Activated CD4-positive, alpha-beta T cell treated with anti-CD3 and anti-CD28 coated beads for 36 hours (primary cell): ENCODE measurements at regions of chr5 and their contacts with region 1.

Region 1: DNA sequence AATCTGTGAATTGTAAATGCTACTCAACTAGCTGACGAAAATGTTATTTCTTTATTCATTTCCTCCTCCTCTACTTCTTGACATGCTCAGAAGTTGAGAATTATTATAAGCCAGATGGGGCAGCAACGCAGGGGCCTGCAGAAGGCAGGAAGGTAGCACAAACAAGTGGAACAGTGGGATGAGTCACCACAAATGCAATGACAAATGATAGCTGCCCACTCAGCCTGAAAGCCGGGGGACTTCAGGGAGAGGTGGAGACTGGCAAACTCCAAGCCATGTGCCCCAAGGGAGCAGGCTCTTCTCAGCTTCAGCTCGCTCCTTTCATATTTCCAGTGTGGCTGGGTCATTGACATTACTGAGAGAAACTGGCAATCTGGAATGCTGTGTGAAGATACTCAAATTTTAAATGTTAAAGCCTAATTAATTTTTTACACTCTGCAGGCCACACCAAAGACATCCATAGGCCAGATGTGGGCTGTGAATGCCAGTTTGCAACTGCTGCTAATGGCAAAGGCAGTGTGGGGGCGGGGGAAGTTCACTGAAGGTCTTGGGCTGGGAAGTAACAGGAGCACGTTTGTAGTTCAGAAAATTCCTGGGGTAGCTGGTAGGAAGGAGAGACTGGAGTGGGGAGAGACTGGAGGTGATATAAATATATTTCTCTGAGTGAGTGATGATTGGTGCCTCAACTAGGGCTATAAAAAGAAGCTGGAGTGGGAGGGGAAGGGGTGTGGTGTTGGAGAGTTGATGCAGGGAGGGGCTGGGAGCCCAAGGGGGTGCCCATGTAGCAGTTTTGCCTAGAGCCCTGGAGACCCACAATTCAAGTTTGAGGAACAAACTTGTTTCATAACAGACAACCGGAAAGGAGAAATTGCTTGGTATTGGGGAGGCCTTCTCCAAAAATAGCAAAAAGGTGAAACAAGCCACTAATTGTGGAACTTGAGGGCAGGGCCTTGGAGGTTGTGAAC is 20.8 kb upstream of the ADRB2 start:
- DNase-seq: peak; percentile 62
- ATAC-seq: peak; percentile 60
- H3K4me3 Mint-ChIP-seq: no peak overlapping the region
- H3K27ac Mint-ChIP-seq: peak overlapping the region; percentile 21
- H3K4me1 Mint-ChIP-seq: peaks cover 40% of the 10 kb centered on the region
- H3K27me3 Mint-ChIP-seq: peaks cover 17% of the 10 kb centered on the region

Region 2: DNA sequence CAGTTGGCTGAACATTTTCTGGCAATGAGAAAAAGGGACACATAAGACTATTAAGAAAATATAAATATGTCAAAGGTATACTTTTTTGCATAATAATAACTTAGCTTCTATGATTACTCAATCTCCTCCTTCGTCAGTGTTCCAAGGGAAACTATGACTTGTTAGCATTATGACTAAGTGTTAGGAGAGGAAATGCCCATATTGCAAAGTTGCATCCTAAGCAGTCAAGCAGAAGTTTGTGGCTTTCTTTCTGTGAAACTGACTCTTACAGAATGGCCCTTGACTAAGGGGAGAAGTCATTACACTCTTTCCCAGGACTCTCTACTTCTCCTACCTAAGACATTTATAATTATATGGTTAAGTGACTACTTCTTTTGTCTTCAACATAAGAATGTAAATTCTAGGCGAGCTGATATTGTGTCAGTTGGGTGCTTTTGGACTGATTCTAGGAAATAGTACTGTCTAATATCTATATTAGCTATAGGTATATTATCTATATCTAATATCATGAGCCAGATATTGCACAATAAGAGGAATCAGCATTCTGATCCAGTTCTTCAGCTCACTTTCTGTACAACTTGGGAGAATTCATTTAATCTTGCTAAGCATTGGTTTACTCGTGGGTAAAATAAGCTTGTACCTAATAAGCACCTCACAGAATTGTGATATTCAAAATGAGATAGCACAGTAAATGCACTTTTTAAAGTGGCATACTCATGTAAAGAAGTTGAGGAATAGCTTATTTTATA is 619.2 kb before region 1 on chr5:
- CTCF ChIA-PET with region 1: no interaction called
- POLR2A ChIA-PET with region 1: no interaction called
- intact Hi-C with region 1: loop called in 1 of 2 experiments (anchors 5 kb)
- DNase-seq: no peak
- ATAC-seq: peak; percentile 99
- H3K4me3 Mint-ChIP-seq: no peak overlapping the region
- H3K27ac Mint-ChIP-seq: no peak overlapping the region
- H3K4me1 Mint-ChIP-seq: peaks cover 11% of the 10 kb centered on the region
- H3K27me3 Mint-ChIP-seq: peaks cover 15% of the 10 kb centered on the region

Region 3: DNA sequence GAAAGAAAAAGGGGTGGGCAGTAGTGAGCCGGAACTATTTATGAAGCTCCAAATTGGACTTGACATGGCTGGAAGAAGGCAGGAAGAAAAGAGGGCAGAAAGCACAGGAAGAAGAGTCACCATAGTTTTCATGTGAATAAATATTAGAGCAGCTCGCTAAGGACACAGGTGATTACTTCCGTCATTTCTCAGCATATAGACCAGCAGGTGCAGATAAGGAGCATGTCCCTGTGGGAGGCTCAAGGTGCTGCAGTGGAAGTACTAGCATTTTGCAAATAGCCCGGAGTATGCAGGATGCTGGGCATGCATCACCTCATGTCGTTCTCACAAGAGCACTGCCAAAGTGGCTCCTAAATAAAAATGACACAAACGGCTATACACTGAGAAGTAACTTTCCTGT is 79.9 kb before region 1 on chr5:
- CTCF ChIA-PET with region 1: no interaction called
- POLR2A ChIA-PET with region 1: no interaction called
- intact Hi-C with region 1: no loop called
- DNase-seq: no peak
- ATAC-seq: no peak
- H3K4me3 Mint-ChIP-seq: no peak overlapping the region
- H3K27ac Mint-ChIP-seq: no peak overlapping the region
- H3K4me1 Mint-ChIP-seq: no peaks in the 10 kb centered on the region
- H3K27me3 Mint-ChIP-seq: peaks cover 16% of the 10 kb centered on the region

Region 4: GRCh38 chr5:148791334-148791667 is 14.3 kb before region 1 on chr5:
- CTCF ChIA-PET with region 1: interaction called, 5 read pairs
- POLR2A ChIA-PET with region 1: interaction called, 12 read pairs
- intact Hi-C with region 1: loop called (anchors 1 kb)
- DNase-seq: peak; percentile 68
- ATAC-seq: peak; percentile 94
- H3K4me3 Mint-ChIP-seq: no peak overlapping the region
- H3K27ac Mint-ChIP-seq: no peak overlapping the region
- H3K4me1 Mint-ChIP-seq: peaks cover 23% of the 10 kb centered on the region
- H3K27me3 Mint-ChIP-seq: peaks cover 45% of the 10 kb centered on the region

Region 5: DNA sequence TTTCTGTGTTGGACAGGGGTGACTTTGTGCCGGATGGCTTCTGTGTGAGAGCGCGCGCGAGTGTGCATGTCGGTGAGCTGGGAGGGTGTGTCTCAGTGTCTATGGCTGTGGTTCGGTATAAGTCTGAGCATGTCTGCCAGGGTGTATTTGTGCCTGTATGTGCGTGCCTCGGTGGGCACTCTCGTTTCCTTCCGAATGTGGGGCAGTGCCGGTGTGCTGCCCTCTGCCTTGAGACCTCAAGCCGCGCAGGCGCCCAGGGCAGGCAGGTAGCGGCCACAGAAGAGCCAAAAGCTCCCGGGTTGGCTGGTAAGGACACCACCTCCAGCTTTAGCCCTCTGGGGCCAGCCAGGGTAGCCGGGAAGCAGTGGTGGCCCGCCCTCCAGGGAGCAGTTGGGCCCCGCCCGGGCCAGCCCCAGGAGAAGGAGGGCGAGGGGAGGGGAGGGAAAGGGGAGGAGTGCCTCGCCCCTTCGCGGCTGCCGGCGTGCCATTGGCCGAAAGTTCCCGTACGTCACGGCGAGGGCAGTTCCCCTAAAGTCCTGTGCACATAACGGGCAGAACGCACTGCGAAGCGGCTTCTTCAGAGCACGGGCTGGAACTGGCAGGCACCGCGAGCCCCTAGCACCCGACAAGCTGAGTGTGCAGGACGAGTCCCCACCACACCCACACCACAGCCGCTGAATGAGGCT is 20.6 kb after region 1 on chr5 and contains the start of gene ADRB2:
- CTCF ChIA-PET with region 1: interaction called, 13 read pairs
- POLR2A ChIA-PET with region 1: no interaction called
- intact Hi-C with region 1: loop called (anchors 1 to 2 kb)
- DNase-seq: peak; percentile 89
- ATAC-seq: peak; percentile 95
- H3K4me3 Mint-ChIP-seq: peak within 1 kb of the TSS; percentile 66
- H3K27ac Mint-ChIP-seq: peak within 1 kb of the TSS; percentile 3
- H3K4me1 Mint-ChIP-seq: peaks cover 22% of the 10 kb centered on the region
- H3K27me3 Mint-ChIP-seq: peaks cover 30% of the 10 kb centered on the region
- total RNA-seq, gene ADRB2: 0.09 TPM in 1 of 2 experiments, not detected in the other